Dorsolateral prefrontal cortex (tissue), 120 donors: ENCODE measurements at regions of chr5 and their contacts with region 1.

Region 1: DNA sequence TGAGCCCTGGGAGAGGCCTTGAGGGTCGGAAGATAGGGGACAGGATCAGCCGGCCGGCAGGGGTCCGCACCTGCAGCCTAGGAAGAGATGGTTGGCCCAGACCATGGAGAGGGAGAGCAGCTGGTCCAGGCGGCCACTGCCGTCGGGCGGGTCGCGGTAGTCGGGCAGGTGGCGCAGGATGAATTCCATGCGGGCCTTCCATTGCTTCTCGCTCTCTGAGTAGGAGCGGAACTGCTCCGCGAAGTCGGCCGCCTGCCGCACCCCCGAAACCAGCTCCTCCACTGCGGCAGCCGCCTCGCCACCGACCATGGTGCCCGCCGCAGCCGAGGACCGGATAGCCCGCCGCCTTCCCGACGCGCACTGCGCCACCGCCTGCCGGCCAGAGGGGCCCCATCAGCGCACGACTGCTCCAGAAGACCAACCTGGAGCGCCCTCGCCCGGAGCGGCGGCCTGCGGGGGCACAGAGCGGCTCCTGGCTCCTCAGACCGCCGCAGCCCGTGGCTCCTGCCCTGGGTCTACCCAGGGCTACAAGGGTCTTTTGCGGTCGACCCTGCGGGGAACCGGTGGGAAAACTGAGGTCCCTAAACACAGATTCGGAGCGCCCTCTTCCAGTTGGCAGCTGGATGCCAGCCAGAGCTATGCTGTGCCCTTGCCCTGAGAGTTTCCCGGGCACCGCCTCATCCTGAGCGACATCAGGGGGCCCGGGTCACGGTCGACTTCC is at the start of gene CDKN2AIPNL:
- DNase-seq: peak; percentile 88 to 97 (median 92)
- H3K4me3 ChIP-seq: peak within 1 kb of the TSS; percentile 62 to 99 (median 89)
- H3K27ac ChIP-seq: peak within 1 kb of the TSS; percentile 4 to 95 (median 84)
- H3K27me3 ChIP-seq: no peaks in the 10 kb centered on the region
- CTCF ChIP-seq: peak; percentile 73 to 99 (median 94)
- total RNA-seq, gene CDKN2AIPNL: 16.6 to 49.6 (median 33.7) TPM

Region 2: DNA sequence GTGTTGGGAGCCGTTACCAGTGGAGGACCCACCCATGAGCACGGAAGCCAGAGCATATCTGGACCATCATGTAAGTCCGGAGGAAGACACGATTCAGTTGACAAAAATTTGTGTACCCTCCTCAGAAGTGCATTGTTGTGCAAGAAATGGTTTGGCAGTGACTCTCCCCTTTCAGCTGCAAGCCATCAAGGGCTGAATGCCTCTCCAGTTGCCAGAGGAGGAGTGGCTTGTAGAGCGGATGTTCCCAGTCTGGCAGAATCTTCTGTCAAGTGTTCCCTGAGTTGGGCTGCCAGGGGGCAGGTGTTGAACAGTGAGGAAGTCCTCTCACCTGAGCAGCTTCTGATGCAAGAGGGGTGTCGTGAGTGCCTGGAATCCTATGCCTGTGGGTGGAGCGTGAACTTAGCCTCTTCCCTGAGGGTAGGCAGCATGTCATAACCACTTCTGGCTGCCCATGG is 27.5 kb after region 1 on chr5:
- intact Hi-C with region 1: loop called in 1 of 2 experiments (anchors 2 kb)
- DNase-seq: peak in 6 of 10 donors; percentile 31 to 56 (median 45)
- H3K4me3 ChIP-seq: peak overlapping the region in 2 of 59 donors; percentile 3 to 14
- H3K27ac ChIP-seq: peak overlapping the region in 16 of 59 donors; percentile 6 to 59 (median 28)
- H3K27me3 ChIP-seq: no peaks in the 10 kb centered on the region
- CTCF ChIP-seq: no peak

Region 3: GRCh38 chr5:134465816-134466240 is 54.1 kb after region 1 on chr5:
- intact Hi-C with region 1: loop called (anchors 1 to 2 kb)
- DNase-seq: peak; percentile 69 to 89 (median 76)
- H3K4me3 ChIP-seq: peak overlapping the region; percentile 36 to 79 (median 66)
- H3K27ac ChIP-seq: peak overlapping the region; percentile 76 to 99 (median 96)
- H3K27me3 ChIP-seq: no peaks in the 10 kb centered on the region
- CTCF ChIP-seq: peak in 3 of 56 donors; percentile 5 to 16 (median 12)

Region 4: GRCh38 chr5:134503088-134503946 is 91.6 kb after region 1 on chr5:
- intact Hi-C with region 1: no loop called
- DNase-seq: peak in 5 of 10 donors; percentile 9 to 62 (median 30)
- H3K4me3 ChIP-seq: no peak overlapping the region
- H3K27ac ChIP-seq: peak overlapping the region in 36 of 59 donors; percentile 8 to 70 (median 40)
- H3K27me3 ChIP-seq: no peaks in the 10 kb centered on the region
- CTCF ChIP-seq: no peak